SK-N-SH (cell line): ENCODE measurements at regions of chr18 and their contacts with region 1.

Region 1: DNA sequence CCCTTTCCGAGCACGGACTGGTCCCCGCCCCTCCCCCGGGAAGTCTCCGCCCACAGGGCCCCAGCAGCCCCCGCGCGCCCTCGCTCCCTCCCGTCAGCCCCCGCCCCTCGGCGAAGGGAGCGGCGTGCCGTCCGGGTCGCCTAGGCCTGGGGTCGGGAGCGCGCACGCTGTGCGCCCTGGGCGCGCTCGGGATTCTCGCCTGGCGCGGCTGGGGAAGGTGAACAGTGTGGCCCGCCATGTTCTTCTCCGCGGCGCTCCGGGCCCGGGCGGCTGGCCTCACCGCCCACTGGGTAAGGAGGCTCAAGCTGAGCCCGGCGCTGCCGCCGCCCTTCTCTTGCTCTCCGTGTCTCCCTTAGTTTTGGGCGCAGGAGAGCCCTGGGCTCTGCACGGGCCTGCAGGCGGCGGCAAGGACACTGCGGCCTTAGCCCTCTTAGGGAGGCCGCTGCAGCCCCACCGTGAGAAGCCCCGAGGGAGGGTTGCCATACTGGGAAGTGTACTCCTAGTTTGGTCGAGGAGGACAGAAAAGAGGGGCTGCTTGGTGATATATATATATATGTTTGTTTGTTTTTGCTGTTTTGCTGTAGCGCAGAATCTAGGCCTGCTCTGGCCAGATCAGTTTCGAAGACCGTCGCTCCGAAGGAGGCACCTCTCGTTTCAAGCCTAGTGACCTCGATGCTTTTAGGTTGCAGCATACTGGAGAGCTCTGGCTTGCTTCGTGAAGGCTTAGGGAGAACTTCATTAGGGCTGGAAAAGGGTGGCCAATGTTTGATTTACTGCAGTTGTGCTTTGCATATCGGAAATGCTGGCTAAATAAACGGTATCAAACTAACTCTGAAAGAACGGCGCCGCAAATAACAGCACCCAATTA is at the start of gene NDUFV2:
- DNase-seq: peak; percentile 99
- H3K4me3 ChIP-seq: peak within 1 kb of the TSS; percentile 70 to 84
- H3K27ac ChIP-seq: peak within 1 kb of the TSS; percentile 88 to 93
- H3K4me1 ChIP-seq: peaks cover 11 to 24% of the 10 kb centered on the region in 2 experiments; a peak in 2 of 4 replicates
- H3K27me3 ChIP-seq: no peaks in the 10 kb centered on the region
- CTCF ChIP-seq: no peak
- EP300 ChIP-seq: no peak
- RAD21 ChIP-seq: no peak
- polyA plus RNA-seq, gene NDUFV2: 99.1 and 101 TPM in 2 replicates

Region 2: DNA sequence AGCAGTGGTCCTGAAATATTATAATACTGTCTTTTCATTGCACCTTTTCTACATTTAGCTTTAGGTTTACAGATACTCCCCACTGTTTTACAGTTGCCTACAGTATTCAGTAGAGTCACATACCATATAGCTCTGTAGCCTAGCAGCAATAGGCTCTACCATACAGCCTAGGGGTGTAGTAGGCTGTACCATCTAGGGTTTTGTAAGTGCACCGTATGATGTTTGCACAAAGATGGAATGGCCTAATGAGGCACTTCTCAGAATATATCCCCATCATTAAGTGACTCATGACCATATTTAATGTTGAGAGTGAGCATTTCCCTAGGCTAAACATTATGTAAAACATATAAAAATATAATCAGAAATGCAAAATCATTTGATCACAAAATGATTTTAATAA is 1004.8 kb before region 1 on chr18:
- CTCF ChIA-PET with region 1: no interaction called
- POLR2A ChIA-PET with region 1: no interaction called
- DNase-seq: no peak
- H3K4me3 ChIP-seq: no peak overlapping the region
- H3K27ac ChIP-seq: no peak overlapping the region; a peak in 1 of 4 replicates
- H3K4me1 ChIP-seq: no peaks in the 10 kb centered on the region
- H3K27me3 ChIP-seq: no peaks in the 10 kb centered on the region
- CTCF ChIP-seq: no peak
- EP300 ChIP-seq: no peak
- RAD21 ChIP-seq: no peak

Region 3: GRCh38 chr18:8943900-8944870 is 158.6 kb before region 1 on chr18:
- CTCF ChIA-PET with region 1: no interaction called
- POLR2A ChIA-PET with region 1: no interaction called
- DNase-seq: no peak
- H3K4me3 ChIP-seq: no peak overlapping the region
- H3K27ac ChIP-seq: peak overlapping the region in 1 of 2 experiments; percentile 94; a peak in 2 of 4 replicates
- H3K4me1 ChIP-seq: peaks cover 15 to 34% of the 10 kb centered on the region in 2 experiments
- H3K27me3 ChIP-seq: no peaks in the 10 kb centered on the region
- CTCF ChIP-seq: no peak
- EP300 ChIP-seq: peak in 1 of 2 experiments; percentile 59; a peak in 1 of 4 replicates
- RAD21 ChIP-seq: no peak

Region 4: GRCh38 chr18:9136315-9137155 is 33.8 kb after region 1 on chr18 and contains the start of gene ANKRD12:
- CTCF ChIA-PET with region 1: interaction called, 9 read pairs
- POLR2A ChIA-PET with region 1: interaction called, 21 read pairs
- DNase-seq: peak; percentile 98
- H3K4me3 ChIP-seq: peak within 1 kb of the TSS; percentile 86 to 90
- H3K27ac ChIP-seq: peak within 1 kb of the TSS; percentile 96 to 98
- H3K4me1 ChIP-seq: peaks cover 15 to 18% of the 10 kb centered on the region in 2 experiments; a peak in 3 of 4 replicates
- H3K27me3 ChIP-seq: no peaks in the 10 kb centered on the region
- CTCF ChIP-seq: no peak
- EP300 ChIP-seq: no peak
- RAD21 ChIP-seq: no peak
- polyA plus RNA-seq, gene ANKRD12: 1.1 and 1.3 TPM in 2 replicates